ENCODE measurements at regions of chr1 and their contacts with region 1.

Region 1: GRCh38 chr1:27392096-27392777 is at the start of gene GPR3:
- DNase-seq: peak; percentile 96
- ATAC-seq: peak; percentile 72
- H3K4me3 Mint-ChIP-seq: peak within 1 kb of the TSS; percentile 91
- H3K27ac Mint-ChIP-seq: peak within 1 kb of the TSS; percentile 95
- H3K4me1 Mint-ChIP-seq: peaks cover 24% of the 10 kb centered on the region
- H3K27me3 Mint-ChIP-seq: peaks cover 4% of the 10 kb centered on the region
- CTCF ChIP-seq: peak; percentile 20; the same call in 1 of the 2 replicates
- total RNA-seq, gene GPR3: 7.8 to 12.4 TPM (median 7.8 TPM) in 3 replicates

Region 2: DNA sequence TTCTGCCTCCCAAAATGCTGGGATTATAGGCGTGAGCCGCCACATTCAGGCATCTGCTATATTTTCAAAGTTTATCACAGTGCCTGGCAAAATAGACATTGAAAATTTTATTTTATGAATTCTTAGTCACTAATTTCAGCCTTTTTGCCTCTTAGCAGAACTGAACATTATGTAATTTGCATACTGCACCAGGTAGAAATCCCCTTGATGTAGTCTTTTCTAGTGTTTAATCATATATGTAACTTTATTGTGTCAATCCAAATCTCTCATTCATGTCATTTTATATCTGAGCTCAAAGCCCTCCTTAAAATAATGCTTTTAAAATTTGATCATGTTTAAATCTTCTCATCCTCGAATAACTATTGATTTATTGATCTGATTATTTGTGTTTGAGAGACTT is 138.6 kb before region 1 on chr1:
- CTCF ChIA-PET with region 1: no interaction called
- POLR2A ChIA-PET with region 1: no interaction called
- DNase-seq: no peak
- ATAC-seq: no peak
- H3K4me3 Mint-ChIP-seq: no peak overlapping the region
- H3K27ac Mint-ChIP-seq: no peak overlapping the region
- H3K4me1 Mint-ChIP-seq: no peaks in the 10 kb centered on the region
- H3K27me3 Mint-ChIP-seq: no peaks in the 10 kb centered on the region
- CTCF ChIP-seq: no peak

Region 3: GRCh38 chr1:27332536-27333281 is 59.5 kb before region 1 on chr1:
- CTCF ChIA-PET with region 1: interaction called, 12 read pairs
- POLR2A ChIA-PET with region 1: no interaction called
- DNase-seq: peak; percentile 80
- ATAC-seq: peak; percentile 92
- H3K4me3 Mint-ChIP-seq: no peak overlapping the region
- H3K27ac Mint-ChIP-seq: no peak overlapping the region; the same call in 1 of the 2 replicates
- H3K4me1 Mint-ChIP-seq: no peaks in the 10 kb centered on the region
- H3K27me3 Mint-ChIP-seq: no peaks in the 10 kb centered on the region; the same call in 1 of the 2 replicates
- CTCF ChIP-seq: peak; percentile 88

Region 4: DNA sequence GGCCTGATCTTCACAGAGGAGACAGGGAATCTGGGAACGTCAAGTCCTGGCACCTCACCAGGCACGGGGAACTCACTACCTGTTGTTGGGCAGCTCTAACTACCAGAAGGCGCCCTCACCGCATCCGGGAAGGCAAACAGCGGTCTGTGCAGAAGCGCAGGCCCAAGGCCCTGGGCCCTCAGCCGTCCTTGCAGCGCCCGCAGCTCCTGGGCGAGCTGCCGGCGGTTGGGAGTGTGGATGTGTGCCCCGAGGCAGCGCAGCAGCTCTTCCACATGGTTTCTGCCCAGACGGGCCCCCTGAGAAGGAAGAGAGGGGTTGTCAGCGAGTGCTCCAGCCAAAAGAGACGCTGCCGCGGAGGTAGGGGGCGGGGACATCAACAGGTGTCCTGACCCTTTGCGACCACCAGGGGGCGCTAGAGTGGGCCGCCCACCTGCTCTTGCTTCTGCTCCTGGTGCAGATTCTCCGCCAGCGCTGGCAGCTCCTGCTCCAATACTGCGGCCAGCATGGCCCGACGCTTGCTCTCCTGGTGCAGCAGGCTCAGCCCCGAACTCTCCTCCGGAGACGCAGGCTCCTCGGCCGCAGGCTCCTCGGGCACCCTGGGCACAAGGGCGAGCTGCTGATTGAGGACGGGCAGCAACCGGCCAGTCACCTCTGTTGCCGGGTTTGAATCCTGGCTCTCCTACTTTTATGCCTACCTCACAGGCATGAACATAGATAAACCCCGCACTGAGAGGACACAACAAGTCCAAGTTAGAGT is 34.8 kb before region 1 on chr1:
- CTCF ChIA-PET with region 1: interaction called, 36 read pairs
- POLR2A ChIA-PET with region 1: no interaction called
- DNase-seq: peak; percentile 87
- ATAC-seq: peak; percentile 70
- H3K4me3 Mint-ChIP-seq: peak overlapping the region; percentile 37
- H3K27ac Mint-ChIP-seq: no peak overlapping the region
- H3K4me1 Mint-ChIP-seq: peaks cover 17% of the 10 kb centered on the region
- H3K27me3 Mint-ChIP-seq: peaks cover 49% of the 10 kb centered on the region
- CTCF ChIP-seq: peak; percentile 100

Region 5: DNA sequence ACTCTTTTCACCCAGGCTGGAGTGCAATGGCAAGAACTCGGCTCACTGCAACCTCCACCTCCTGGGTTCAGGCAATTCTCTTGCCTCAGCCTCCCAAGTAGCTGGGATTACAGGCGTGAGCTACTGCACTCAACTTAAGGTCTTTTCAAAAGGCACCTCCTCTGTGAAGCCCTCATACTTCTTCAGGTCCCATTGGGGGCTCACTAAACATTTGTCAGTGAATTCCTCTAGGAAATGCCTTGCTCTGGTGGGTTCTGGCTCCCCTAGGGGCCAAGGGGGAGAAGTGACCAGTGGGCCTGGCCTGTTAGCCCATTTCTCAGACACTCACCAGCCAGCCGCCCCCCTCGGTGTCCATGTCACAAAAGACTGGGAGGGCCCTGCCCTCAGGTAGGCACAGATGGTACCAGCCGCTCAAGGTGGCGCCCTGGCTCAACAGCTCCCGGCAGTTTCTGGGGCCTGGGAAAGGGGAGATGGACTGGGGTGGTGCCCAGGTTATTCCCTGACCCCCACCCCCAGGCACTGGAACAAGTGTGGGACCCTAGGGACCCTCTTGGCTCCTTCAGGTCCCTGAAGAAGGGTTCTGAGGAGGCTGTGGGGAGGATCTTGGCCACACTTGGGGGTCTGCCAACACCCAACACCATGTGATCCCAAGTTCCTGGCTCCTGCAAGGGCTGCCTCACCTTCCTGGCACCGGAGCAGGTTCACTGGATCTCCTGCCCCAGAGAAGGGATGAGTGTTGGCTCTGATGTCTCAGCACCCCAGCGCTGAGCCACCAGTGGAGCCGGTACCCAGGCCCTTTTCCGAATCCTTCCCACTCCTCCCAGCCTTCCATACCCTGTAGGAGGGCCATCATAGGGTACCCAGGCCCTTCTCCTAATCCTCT is 19.2 kb before region 1 on chr1:
- CTCF ChIA-PET with region 1: interaction called, 12 read pairs
- POLR2A ChIA-PET with region 1: interaction called, 3 read pairs
- DNase-seq: peak; percentile 63
- ATAC-seq: peak; percentile 90
- H3K4me3 Mint-ChIP-seq: no peak overlapping the region
- H3K27ac Mint-ChIP-seq: no peak overlapping the region
- H3K4me1 Mint-ChIP-seq: peaks cover 9% of the 10 kb centered on the region
- H3K27me3 Mint-ChIP-seq: peaks cover 3% of the 10 kb centered on the region; the same call in 1 of the 2 replicates
- CTCF ChIP-seq: peak; percentile 48; the same call in 1 of the 2 replicates

Region 6: DNA sequence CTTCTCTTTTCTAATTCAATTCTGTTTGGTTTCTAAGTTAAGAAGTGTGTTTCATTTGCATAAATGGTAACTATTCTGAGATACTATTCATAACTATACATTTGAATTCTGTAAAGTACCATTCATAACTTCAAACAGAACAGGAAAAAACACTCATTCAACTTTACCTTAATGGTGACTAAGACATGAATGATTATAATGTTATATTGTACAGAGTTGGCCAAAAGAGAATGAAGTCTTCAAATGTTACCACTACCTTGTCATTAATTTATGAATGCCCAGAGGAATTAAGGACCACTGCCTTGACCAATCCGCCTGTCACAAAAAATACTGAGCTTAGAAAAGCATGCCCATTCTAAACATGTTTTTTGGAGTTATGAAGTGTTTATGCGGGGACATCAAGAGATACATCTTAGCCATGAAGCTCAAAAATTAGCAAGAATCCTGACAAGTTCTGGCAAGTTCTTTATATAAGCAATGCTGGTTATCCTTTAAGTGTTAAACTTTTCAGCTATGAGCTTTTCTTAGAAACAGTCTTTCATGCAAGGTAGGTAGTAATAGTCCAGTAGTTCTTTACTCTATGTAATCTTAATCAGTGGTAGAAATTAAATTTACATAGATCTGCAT is 89.9 kb after region 1 on chr1:
- CTCF ChIA-PET with region 1: no interaction called
- POLR2A ChIA-PET with region 1: no interaction called
- DNase-seq: no peak
- ATAC-seq: no peak
- H3K4me3 Mint-ChIP-seq: no peak overlapping the region
- H3K27ac Mint-ChIP-seq: peak overlapping the region; percentile 75
- H3K4me1 Mint-ChIP-seq: peaks cover 29% of the 10 kb centered on the region
- H3K27me3 Mint-ChIP-seq: no peaks in the 10 kb centered on the region
- CTCF ChIP-seq: no peak

Region 7: DNA sequence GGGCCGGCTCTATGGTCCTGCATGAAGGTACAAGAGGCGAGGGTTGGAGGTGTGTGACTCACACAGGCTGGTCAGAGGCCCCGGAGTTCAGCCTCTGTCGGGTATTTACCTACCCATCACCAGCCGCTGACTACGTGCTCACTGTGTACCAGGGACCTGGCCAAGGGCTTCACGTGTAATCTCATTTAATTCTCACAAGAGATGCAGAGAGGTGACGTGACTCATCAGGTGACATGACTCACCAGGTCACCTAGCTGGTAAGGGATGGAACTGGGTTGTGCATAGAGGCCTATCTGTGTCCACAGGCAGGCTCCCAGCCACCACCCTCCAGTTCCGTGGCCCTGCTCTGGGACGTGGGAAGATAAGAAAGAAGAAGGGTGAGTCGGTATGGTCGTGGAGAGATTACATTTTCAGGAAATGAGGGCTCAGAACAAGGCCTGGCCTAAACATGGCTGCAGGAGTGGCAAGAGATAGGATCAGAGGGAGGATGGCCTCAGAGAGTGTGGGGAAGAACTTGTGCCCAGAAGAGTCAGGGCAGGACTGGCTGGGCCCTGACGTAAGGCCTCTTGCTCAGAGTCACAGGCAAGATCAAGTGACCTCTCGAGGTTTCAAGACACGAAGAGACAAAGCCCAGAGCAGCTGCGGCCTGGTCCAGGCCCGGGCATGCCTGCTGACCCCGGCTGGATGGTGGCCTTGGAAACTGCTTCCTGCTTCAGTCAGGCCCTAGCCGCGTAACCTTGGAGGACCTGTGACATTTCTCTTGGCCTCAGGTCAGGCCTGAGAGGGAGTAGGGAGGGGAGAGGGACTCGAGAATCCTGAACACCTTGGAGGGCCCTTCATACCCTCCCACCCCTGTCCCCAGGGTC is 150.4 kb after region 1 on chr1:
- CTCF ChIA-PET with region 1: interaction called, 14 read pairs
- POLR2A ChIA-PET with region 1: no interaction called
- DNase-seq: no peak
- ATAC-seq: no peak
- H3K4me3 Mint-ChIP-seq: no peak overlapping the region
- H3K27ac Mint-ChIP-seq: peak overlapping the region; percentile 92
- H3K4me1 Mint-ChIP-seq: peaks cover 40% of the 10 kb centered on the region
- H3K27me3 Mint-ChIP-seq: no peaks in the 10 kb centered on the region
- CTCF ChIP-seq: no peak

Measured in WTC11 (cell line).